GM10248 (cell line): ENCODE measurements at regions of chr2 and their contacts with region 1.

Region 1: DNA sequence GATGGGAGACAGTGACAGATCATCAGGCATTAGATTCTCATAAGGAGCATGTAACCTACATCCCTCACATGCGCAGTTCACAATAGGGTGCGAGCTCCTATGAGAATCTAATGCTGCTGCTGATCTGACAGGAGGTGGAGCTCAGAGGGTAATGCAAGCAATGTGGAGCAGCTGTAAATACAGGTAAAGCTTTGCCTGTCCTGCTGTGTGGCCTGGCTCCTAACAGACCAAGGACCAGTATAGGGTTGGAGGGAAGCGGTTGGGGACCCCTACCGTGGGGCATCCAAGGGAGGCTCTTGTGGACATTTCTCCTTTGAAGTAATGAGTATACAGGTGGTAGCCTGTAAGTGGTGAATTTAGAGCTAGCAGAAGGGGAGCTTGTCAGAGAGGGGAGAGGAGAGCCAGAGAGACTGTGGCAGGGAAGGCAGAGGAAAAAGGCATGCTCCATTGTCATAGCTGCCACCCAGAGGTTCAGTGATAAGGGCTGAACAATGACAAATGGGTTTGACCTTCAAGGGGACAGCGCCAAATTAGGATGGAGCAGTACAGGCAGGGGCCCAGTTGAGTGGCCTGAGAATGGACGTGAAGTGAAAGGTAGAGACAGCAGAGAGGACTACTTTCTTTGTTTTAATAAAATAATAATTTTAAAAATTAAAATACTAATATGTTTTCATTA is 15.2 kb upstream of the TMBIM1 start:
- DNase-seq: no peak
- CTCF ChIP-seq: no peak

Region 2: GRCh38 chr2:218322895-218323808 is 15.6 kb after region 1 on chr2:
- CTCF ChIA-PET with region 1: interaction called, 23 read pairs
- POLR2A ChIA-PET with region 1: no interaction called
- DNase-seq: peak; percentile 93
- CTCF ChIP-seq: no peak